ENCODE measurements at regions of chr1 and their contacts with region 1.

Region 1: DNA sequence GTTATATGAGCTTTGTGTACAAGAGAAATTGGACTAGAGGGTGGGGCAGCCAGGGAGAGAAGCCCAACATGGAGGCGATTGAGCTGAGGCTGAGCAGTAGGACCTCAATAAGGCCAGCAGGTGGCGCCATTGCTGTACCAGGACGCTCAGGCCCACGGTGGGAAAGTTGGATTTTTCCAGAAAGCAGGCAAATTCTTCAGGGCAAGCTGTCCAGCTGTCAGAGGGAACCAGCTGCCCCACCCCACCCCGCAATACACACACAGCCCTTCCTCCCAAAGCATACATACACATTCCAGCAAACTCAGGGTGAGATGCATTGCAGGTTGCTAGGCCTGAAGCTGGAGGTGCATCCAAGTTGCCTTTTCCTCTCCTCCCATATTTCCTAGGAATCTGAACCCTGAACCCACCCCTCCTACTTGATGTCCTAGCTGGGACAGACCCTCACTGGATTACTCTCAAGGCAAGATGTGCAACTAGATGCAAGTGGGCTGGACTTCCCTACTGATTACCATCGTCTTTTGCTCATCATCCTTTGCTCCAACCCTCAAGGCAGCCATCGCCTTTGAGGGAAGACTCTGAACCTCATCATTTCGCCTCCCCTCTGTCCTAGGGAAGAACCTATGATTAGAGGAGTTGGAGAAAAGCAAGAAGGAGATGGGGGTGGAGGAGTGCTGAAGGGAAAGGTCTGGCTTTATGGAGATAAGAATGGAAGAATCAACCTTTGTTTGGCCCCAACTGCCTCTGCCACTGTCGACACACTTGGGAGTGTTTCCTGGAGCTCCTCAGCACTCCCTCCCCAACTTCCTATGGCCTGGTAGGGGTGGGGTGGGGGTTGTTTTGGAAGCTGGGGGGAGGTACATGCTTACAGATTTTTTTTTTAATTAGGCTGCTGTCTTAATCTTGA is 25.5 kb downstream of the CD34 start:
- DNase-seq: peak; percentile 86 to 95 (median 89)
- H3K4me3 ChIP-seq: no peak overlapping the region
- H3K27ac ChIP-seq: peak overlapping the region; percentile 26 to 77
- H3K4me1 ChIP-seq: peaks cover 0 to 20% (median 17%) of the 10 kb centered on the region in 3 donors
- H3K27me3 ChIP-seq: no peaks in the 10 kb centered on the region
- CTCF ChIP-seq: peak; percentile 98

Region 2: DNA sequence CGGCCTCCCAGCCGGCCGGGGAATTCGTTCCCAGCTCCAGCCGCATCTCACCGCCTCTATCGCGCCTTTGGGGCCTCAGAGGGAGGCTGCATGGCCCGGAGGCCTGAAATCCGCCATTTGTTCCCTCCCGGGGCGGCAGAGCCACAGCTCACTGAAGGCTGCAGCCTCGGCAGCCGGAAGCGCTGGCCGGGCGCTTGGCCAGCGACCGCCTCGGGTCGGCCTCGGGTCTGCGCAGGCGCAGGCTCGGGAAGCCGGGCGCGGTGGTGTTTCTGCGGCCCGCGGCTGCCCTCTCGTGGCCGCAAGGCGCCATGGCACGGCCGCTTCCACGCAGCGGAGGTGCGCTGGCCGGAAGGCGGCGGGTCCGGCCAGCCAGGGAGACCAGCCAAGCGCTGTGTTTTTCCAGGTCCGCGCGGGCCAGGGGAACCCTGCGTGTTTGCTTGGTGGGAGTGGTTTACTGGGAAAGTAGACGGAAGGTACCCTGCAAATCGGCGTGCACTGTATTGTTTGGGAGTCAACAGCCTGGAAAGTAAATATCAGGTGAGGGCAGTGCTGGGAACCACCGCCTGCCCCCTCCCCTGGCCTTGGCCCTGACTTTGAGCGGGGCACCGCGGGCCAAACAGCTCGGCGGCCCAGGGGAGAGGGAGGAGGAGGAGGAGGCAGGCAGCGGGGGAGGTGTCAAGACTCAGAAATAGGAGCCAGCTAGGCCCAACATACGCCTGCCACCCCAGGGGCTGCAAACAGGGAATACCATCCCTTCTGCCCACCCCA is 78.2 kb after region 1 on chr1:
- intact Hi-C with region 1: loop called (anchors 5 kb)
- DNase-seq: peak; percentile 93 to 97 (median 95)
- H3K4me3 ChIP-seq: peak overlapping the region; percentile 34 to 72 (median 67)
- H3K27ac ChIP-seq: peak overlapping the region; percentile 71 to 93
- H3K4me1 ChIP-seq: peaks cover 0 to 10% (median 8%) of the 10 kb centered on the region in 3 donors
- H3K27me3 ChIP-seq: peaks cover 4% of the 10 kb centered on the region
- CTCF ChIP-seq: peak; percentile 99

Measured in kidney (tissue), 22 donors.